Heart right ventricle (tissue), 16 donors: ENCODE measurements at regions of chr21 and their contacts with region 1.

Region 1: DNA sequence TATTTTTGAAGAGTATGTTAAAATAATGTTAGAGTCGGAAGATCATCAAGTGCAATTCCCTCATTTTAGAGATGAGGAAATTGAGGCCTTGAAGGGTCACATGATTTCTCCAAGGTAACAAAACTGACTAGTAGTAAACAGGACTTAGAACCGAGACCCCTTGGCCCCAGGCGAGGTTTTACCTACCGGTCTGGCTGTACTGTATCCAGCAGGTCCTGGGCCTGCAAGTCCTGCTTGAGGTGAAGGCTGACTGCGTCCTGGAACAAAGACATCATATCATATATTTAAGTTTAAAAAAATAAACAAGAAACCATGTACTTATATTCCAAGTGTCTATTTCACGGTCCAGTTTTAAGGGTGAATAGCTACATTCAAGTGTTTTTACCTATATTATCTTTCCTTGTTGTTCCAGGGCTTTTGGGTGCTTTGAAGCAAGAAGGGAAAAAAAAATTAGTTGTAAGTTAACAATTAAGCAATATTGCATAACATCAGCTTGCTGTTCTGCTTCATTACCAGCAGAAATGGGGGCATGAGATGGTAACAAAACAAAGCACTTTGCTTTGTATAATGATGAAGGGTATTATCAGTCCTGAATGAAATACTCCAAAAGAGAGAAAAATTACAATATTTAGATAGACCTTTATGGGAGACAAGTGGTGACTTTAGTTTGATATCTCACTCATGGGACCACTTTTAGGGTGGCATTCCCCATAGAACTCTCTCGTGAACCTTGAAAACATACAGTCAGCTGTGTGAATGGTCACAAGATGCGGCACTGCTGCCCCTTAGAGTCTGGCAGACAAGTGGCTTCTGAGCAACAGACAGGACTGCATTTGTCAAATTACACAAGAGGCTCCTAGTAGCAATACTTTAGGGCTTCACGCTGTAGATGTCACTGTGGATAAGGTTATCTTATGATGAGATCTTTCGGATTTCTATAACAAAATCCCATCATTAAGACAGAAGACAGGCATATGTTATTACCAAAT is 29.8 kb upstream of the CFAP298 start:
- DNase-seq: no peak
- ATAC-seq: no peak
- H3K4me3 ChIP-seq: no peak overlapping the region
- H3K27ac ChIP-seq: no peak overlapping the region
- H3K4me1 ChIP-seq: no peaks in the 10 kb centered on the region
- H3K27me3 ChIP-seq: no peaks in the 10 kb centered on the region
- CTCF ChIP-seq: no peak

Region 2: GRCh38 chr21:31696424-31696823 is 945.6 kb before region 1 on chr21:
- intact Hi-C with region 1: loop called in 1 of 10 experiments (anchors 10 kb)
- DNase-seq: no peak
- ATAC-seq: no peak
- H3K4me3 ChIP-seq: no peak overlapping the region
- H3K27ac ChIP-seq: no peak overlapping the region
- H3K4me1 ChIP-seq: no peaks in the 10 kb centered on the region
- H3K27me3 ChIP-seq: no peaks in the 10 kb centered on the region
- CTCF ChIP-seq: no peak

Region 3: DNA sequence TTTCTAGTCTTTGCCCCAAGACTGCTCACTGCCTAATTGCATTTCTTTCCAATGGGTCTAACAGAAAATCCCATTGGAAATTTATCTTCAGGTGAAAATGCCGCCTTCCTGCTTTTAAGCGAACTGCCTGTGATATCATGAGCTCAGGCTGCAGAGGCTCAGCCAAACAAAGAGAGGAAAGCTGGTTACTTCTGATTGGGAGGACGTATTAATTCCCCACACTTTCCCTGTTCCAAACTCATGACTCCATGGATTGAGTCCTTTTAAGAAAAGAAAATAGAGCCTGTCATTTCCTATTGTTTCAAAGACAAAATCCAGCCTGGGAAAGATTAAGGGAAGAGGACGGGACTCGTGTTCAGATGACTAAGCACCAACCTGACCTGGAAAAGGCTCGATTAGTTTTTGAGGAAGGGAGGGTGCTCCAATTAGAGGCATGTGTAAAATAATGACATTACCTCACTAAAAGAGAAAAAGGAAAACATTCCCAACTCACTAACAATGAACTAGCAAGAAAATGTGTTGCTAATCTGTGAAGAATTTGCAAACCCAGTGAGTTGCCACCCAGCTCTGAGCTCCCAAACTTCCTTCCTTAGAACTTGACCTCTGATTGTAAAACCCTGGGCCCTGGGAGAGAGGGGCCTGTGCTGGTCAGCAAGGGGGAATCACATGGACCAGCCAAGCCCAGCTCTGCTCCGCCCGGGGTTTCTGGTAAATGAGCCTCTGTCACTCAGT is 117.8 kb before region 1 on chr21:
- intact Hi-C with region 1: no loop called
- DNase-seq: peak in 1 of 2 donors; percentile 67
- ATAC-seq: peak; percentile 35 to 66 (median 58)
- H3K4me3 ChIP-seq: no peak overlapping the region
- H3K27ac ChIP-seq: peak overlapping the region; percentile 41 to 93 (median 88)
- H3K4me1 ChIP-seq: peaks cover 27 to 64% (median 55%) of the 10 kb centered on the region in 9 donors
- H3K27me3 ChIP-seq: no peaks in the 10 kb centered on the region
- CTCF ChIP-seq: no peak

Region 4: DNA sequence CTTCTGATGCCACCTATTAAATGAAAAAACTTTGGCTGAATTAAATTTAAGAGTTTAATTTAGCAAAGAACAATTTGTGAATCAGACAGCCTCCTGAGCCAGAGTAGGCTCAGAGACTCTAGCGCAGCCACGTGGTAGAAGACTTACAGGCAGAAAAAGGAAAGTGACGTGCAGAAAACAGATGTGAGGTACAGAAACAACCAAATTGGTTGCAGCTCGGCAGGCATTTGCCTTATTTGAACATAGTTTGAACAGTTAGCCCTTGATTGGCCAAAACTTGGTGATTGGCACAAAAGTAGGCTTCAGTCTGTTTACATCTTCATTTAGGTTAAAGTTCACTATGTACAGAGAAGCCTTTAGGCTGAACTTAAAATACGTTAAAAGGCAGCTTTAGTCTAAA is 79.6 kb before region 1 on chr21:
- intact Hi-C with region 1: no loop called
- DNase-seq: peak in 1 of 2 donors; percentile 64
- ATAC-seq: peak in 7 of 8 donors; percentile 47 to 92 (median 82)
- H3K4me3 ChIP-seq: no peak overlapping the region
- H3K27ac ChIP-seq: peak overlapping the region in 8 of 10 donors; percentile 10 to 67 (median 57)
- H3K4me1 ChIP-seq: peaks cover 0 to 15% (median 6%) of the 10 kb centered on the region in 9 donors
- H3K27me3 ChIP-seq: no peaks in the 10 kb centered on the region
- CTCF ChIP-seq: peak; percentile 32 to 82 (median 58)